ENCODE measurements at regions of chr17 and their contacts with region 1.

Region 1: DNA sequence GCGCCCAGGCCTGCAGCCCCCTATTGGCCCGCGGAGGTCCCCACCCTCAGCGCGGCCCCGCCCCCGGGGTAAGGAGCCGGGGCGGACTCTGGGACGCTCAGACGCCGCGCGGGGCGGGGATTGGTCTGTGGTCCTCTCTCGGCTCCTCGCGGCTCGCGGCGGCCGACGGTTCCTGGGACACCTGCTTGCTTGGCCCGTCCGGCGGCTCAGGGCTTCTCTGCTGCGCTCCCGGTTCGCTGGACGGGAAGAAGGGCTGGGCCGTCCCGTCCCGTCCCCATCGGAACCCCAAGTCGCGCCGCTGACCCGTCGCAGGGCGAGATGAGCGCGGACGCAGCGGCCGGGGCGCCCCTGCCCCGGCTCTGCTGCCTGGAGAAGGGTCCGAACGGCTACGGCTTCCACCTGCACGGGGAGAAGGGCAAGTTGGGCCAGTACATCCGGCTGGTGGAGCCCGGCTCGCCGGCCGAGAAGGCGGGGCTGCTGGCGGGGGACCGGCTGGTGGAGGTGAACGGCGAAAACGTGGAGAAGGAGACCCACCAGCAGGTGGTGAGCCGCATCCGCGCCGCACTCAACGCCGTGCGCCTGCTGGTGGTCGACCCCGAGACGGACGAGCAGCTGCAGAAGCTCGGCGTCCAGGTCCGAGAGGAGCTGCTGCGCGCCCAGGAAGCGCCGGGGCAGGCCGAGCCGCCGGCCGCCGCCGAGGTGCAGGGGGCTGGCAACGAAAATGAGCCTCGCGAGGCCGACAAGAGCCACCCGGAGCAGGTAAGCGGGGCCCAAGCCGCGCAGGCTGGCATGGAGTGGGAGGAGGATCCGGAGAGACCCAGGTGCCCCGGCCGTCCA is at the start of gene NHERF1:
- DNase-seq: peak in 1 of 2 experiments; percentile 94
- H3K4me3 ChIP-seq: peak within 1 kb of the TSS; percentile 56 to 91 (median 86)
- H3K27ac ChIP-seq: peak within 1 kb of the TSS; percentile 32; the same call in 1 of the 2 replicates
- H3K4me1 ChIP-seq: peaks cover 5 to 45% (median 25%) of the 10 kb centered on the region in 4 experiments
- H3K27me3 ChIP-seq: no peaks in the 10 kb centered on the region
- CTCF ChIP-seq: peak; percentile 34 to 37 (median 35)
- EP300 ChIP-seq: no peak
- POLR2A ChIP-seq: peak in 1 of 2 experiments; percentile 94; a peak in 2 of 3 replicates
- RAD21 ChIP-seq: peak in 1 of 2 experiments; percentile 22; a peak in 1 of 4 replicates
- total RNA-seq, gene NHERF1: 91.3 and 92.9 TPM in 2 replicates

Region 2: DNA sequence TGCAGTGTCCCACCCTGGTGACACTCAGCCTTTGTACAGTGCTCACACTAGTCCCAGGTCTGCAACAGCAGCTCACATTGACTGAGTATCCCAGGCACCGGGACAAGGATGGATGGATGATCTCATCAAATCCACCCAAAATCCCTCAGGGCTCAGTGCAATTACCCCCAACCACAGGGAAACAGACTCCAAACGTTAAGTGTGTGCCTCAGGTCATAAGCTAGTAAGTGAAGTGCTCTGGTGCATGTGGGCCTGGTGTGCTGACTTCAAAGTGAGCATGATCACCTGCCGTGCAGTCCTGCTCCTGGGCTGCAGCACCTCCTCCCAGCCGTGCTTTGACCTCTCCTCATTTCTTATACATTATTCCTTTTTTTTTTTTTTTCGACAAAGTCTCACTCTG is 94.0 kb before region 1 on chr17:
- CTCF ChIA-PET with region 1: interaction called, 38 read pairs
- POLR2A ChIA-PET with region 1: no interaction called
- DNase-seq: no peak
- H3K4me3 ChIP-seq: no peak overlapping the region
- H3K27ac ChIP-seq: no peak overlapping the region
- H3K4me1 ChIP-seq: 0 out of 7 replicates have a peak, but pooled peaks cover 0 to under 1% (median 0%) of the 10 kb centered on the region in 4 experiments
- H3K27me3 ChIP-seq: peaks cover 0 to 2% (median 0%) of the 10 kb centered on the region in 4 experiments; a peak in 2 of 7 replicates
- CTCF ChIP-seq: no peak
- EP300 ChIP-seq: no peak
- POLR2A ChIP-seq: no peak
- RAD21 ChIP-seq: no peak

Region 3: DNA sequence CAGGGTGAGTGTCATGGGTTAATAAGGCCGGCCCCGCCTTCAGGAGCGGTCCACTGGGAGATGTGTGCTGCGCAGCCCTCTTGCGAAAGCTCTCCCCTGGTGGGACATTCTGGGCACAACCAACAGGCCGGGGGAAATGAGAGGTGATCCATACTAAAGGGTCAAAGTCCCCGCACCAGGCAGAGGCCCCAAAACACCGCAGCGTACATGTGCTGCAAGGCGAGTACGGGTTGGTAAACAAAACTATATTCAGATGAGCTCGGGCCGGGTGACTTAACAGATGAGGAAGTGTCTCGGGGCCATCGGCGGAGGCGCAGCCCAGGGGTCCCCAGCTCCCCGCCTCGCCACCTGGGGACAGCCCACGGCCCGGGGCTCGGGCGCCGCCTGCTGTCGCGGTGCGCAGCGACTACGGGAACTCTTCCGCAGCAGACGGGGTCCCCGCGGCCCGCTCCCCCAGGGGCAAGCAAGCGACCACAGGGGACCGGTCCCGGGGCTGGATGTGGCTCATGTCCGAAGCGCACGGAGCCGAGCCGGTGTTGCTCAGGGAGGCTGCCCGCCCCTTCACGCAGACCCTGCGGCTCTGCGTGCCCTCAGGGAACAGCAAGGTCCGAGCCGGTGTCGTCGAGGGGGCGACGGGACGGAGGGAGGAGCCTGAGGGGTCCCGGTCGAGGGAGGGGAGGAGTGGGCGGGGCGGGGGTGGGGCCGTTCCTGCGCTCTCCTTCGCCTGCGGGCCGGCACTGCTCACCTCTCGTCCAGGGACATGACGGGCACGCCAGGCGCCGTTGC is 12.0 kb before region 1 on chr17 and contains the start of gene RAB37:
- CTCF ChIA-PET with region 1: interaction called, 50 read pairs
- POLR2A ChIA-PET with region 1: interaction called, 60 read pairs
- DNase-seq: peak in 1 of 2 experiments; percentile 86
- H3K4me3 ChIP-seq: peak within 1 kb of the TSS; percentile 55 to 75 (median 66)
- H3K27ac ChIP-seq: no peak within 1 kb of the TSS
- H3K4me1 ChIP-seq: peaks cover 5 to 18% (median 9%) of the 10 kb centered on the region in 4 experiments
- H3K27me3 ChIP-seq: peaks cover 0 to 8% (median 2%) of the 10 kb centered on the region in 4 experiments; a peak in 4 of 7 replicates
- CTCF ChIP-seq: peak; percentile 41 to 64 (median 60)
- EP300 ChIP-seq: peak in 1 of 2 experiments; percentile 16; a peak in 1 of 3 replicates
- POLR2A ChIP-seq: no peak
- RAD21 ChIP-seq: peak; percentile 46 to 65; a peak in 3 of 4 replicates
- total RNA-seq, gene RAB37: 5.2 and 5.5 TPM in 2 replicates

Region 4: GRCh38 chr17:74770498-74771318 is 22.0 kb after region 1 on chr17:
- CTCF ChIA-PET with region 1: interaction called, 388 read pairs
- POLR2A ChIA-PET with region 1: interaction called, 54 read pairs
- DNase-seq: peak in 1 of 2 experiments; percentile 82
- H3K4me3 ChIP-seq: no peak overlapping the region
- H3K27ac ChIP-seq: no peak overlapping the region; the same call in 1 of the 2 replicates
- H3K4me1 ChIP-seq: peaks cover 0 to 2% (median under 1%) of the 10 kb centered on the region in 4 experiments; a peak in 3 of 7 replicates
- H3K27me3 ChIP-seq: no peaks in the 10 kb centered on the region
- CTCF ChIP-seq: peak; percentile 93 to 99 (median 96)
- EP300 ChIP-seq: no peak
- POLR2A ChIP-seq: no peak; a peak in 1 of 3 replicates
- RAD21 ChIP-seq: peak; percentile 96

Region 5: GRCh38 chr17:74786431-74787055 is 37.8 kb after region 1 on chr17:
- CTCF ChIA-PET with region 1: interaction called, 388 read pairs
- POLR2A ChIA-PET with region 1: interaction called, 4 read pairs
- DNase-seq: no peak
- H3K4me3 ChIP-seq: no peak overlapping the region
- H3K27ac ChIP-seq: no peak overlapping the region
- H3K4me1 ChIP-seq: peaks cover 0 to 3% (median 3%) of the 10 kb centered on the region in 4 experiments; a peak in 5 of 7 replicates
- H3K27me3 ChIP-seq: no peaks in the 10 kb centered on the region
- CTCF ChIP-seq: no peak
- EP300 ChIP-seq: no peak
- POLR2A ChIP-seq: no peak
- RAD21 ChIP-seq: no peak

Region 6: DNA sequence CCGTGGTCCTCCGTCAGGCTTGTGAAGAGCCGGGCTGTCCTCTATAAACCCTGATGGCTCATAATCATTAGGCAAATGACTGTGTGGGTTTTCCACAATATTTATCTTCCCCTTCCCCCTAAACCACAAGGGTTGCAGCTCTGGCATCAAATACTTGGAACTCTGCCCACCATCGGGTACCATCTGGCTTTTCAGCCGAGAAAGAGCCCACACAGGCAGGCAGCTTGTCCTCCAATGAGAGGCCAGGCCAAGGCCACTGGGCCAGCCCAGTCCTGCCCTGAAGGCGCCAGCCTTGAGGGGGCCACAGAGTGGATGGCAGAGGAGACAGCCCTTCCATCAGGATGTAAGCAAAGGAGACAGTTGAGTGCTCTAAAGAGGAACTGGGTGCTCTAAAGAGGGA is 59.2 kb after region 1 on chr17:
- CTCF ChIA-PET with region 1: interaction called, 12 read pairs
- POLR2A ChIA-PET with region 1: no interaction called
- DNase-seq: no peak
- H3K4me3 ChIP-seq: no peak overlapping the region
- H3K27ac ChIP-seq: no peak overlapping the region
- H3K4me1 ChIP-seq: peaks cover 0 to 4% (median 0%) of the 10 kb centered on the region in 4 experiments; a peak in 1 of 7 replicates
- H3K27me3 ChIP-seq: no peaks in the 10 kb centered on the region; a peak in 1 of 7 replicates
- CTCF ChIP-seq: no peak
- EP300 ChIP-seq: no peak
- POLR2A ChIP-seq: no peak
- RAD21 ChIP-seq: no peak

Region 7: GRCh38 chr17:74864866-74865395 is 116.2 kb after region 1 on chr17:
- CTCF ChIA-PET with region 1: interaction called, 68 read pairs
- POLR2A ChIA-PET with region 1: interaction called, 9 read pairs
- DNase-seq: peak in 1 of 2 experiments; percentile 95
- H3K4me3 ChIP-seq: no peak overlapping the region
- H3K27ac ChIP-seq: no peak overlapping the region
- H3K4me1 ChIP-seq: peaks cover 0 to 7% (median 5%) of the 10 kb centered on the region in 4 experiments; a peak in 4 of 7 replicates
- H3K27me3 ChIP-seq: peaks cover 21 to 23% (median 21%) of the 10 kb centered on the region in 4 experiments
- CTCF ChIP-seq: peak; percentile 92 to 97 (median 96)
- EP300 ChIP-seq: no peak
- POLR2A ChIP-seq: no peak
- RAD21 ChIP-seq: peak; percentile 81 to 86

Measured in H1 (cell line).